A549 (cell line): ENCODE measurements at regions of chr9 and their contacts with region 1.

Region 1: DNA sequence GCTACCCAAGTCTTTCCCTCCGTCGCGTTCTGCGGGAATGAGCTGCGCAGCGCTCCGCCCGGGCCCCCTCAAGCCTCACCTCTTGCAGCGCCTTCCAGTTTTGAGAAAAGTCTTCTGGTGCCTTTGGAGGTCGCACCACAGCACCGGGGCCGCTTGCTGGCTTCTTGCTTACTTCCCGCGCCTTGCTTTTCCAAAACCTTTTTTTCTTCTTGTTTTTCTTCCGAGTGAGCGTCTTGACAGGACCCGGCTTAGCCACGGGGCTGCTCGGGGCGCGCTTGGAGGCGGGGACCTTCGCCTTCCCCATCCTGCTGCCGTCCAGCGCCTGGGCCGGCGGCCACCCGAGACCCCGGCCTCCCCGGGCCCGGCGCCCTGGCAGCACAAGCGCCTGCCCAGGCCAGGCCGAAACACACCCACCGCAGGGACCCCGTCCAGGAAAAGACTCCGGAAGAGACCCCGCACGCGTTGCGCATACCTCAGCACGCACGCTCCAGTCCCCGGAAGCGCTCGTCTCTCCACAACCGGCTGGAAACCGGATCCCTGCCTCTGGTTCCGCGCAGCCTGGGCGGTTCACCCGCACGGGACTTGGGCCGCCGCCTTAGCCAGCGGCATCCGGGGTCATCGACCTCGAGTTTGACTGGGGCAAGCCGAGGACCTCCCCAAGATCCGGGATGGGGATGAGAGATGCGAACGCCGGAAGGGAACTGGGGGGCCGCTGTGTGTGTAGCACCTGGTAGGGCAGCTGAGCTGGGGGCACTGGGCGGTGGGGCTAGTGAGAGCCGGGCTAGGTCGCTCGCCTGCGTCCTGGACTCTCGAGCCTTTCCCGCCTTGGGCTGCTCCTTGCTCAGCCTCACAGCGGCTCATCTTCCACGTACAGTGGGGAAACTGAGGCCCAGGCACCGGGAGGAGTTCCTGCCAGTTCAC is at the start of gene REXO4:
- DNase-seq: peak; percentile 73 to 89
- ATAC-seq: peak; percentile 89 to 96
- H3K4me3 ChIP-seq: peak within 1 kb of the TSS; percentile 98
- H3K27ac ChIP-seq: peak within 1 kb of the TSS; percentile 92 to 93
- H3K4me1 ChIP-seq: peaks cover 14% of the 10 kb centered on the region; the same call in 1 of the 3 replicates
- CTCF ChIP-seq: no peak
- EP300 ChIP-seq: no peak
- POLR2A ChIP-seq: peak; percentile 40; the same call in 1 of the 2 replicates
- RAD21 ChIP-seq: no peak
- polyA plus RNA-seq, gene REXO4: 20.6 and 25.8 TPM in 2 replicates

Region 2: DNA sequence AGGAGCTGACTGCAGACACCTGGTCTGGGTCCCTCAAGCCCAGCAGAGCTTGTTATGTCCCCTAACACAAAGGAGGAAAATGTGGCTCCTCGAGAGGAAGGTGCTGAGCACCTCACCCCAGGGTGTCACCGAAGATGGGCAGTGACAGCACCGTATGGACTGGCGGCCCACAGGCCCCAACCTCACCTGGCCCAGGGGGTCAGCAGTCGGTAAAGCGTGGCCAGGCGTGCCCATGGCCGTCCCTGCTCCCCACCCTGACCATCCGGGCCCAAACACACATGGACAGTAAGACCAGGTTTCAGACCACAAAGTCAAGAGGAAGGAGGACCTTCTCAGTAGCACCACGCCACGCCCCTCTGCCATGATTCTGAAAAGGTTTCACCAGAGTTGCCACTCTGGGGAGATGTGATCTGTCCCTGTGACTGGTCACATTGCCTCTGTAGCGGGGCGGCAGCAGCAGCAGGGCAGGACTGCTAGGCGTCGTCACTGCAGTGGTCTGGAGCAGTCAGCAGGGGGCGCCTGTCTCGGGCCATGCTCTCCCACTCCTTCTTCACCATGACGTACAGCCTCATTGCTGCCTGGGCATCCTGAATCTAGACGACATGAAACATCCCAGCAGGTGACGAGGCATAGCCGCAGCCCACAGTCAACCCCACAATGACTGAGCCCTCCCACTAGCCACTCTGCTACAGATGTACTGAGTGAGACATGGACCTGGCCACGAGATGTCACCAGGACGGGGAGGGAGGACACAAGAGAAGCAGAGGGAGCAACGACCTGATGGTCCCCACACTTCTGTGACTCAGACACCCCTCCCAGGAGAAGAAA is 11.1 kb before region 1 on chr9:
- CTCF ChIA-PET with region 1: interaction called, 45 read pairs
- POLR2A ChIA-PET with region 1: no interaction called
- DNase-seq: peak; percentile 77 to 82
- ATAC-seq: peak; percentile 89 to 91
- H3K4me3 ChIP-seq: no peak overlapping the region
- H3K27ac ChIP-seq: no peak overlapping the region
- H3K4me1 ChIP-seq: no peaks in the 10 kb centered on the region
- CTCF ChIP-seq: peak; percentile 79
- EP300 ChIP-seq: no peak
- POLR2A ChIP-seq: no peak
- RAD21 ChIP-seq: peak; percentile 38 to 55; a peak in 4 of 5 replicates